ENCODE measurements at regions of chr1 and their contacts with region 1.

Region 1: GRCh38 chr1:13667691-13668090 is 32.3 kb upstream of the PRDM2 start:
- DNase-seq: no peak
- H3K4me3 ChIP-seq: no peak overlapping the region
- H3K27ac ChIP-seq: no peak overlapping the region
- H3K4me1 ChIP-seq: no peaks in the 10 kb centered on the region; a peak in 2 of 4 replicates
- H3K27me3 ChIP-seq: no peaks in the 10 kb centered on the region; the same call in 1 of the 2 replicates
- CTCF ChIP-seq: no peak
- EP300 ChIP-seq: no peak
- RAD21 ChIP-seq: no peak

Region 2: DNA sequence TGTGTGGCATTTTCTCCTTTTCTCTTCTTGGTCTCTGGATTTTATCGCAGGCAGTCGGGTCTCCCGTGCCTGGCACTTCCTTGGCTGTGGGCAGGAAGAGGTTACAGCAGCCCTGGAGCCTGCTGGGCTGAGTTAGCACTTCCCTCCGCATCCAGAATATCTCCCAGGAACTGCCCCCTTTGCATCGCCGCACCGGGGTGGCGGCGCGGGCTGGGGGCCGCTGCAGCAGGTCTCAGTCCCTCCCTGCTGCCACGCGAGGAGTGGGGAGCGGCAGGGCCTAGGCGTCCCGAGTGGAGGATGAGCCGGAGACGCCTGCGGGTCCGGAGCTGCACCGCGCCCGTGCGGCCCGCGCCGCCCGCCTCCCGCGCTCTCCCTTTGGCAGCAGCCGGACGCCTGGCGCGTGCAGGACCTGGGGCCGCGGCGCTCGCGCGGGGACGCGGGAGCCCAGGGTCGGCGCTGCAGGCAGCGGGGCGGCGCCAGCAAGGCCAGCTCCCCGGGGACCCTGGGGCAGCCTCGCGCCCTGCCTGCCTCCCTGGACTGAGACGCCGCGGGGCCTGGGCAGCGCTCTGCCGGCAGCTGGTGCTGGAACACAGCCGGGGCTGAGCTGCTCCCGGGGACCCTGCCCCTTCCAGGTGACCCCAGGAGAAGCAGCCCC is 225.1 kb after region 1 on chr1:
- CTCF ChIA-PET with region 1: no interaction called
- POLR2A ChIA-PET with region 1: no interaction called
- DNase-seq: peak; percentile 63
- H3K4me3 ChIP-seq: no peak overlapping the region
- H3K27ac ChIP-seq: no peak overlapping the region
- H3K4me1 ChIP-seq: no peaks in the 10 kb centered on the region
- H3K27me3 ChIP-seq: peaks cover 11% of the 10 kb centered on the region
- CTCF ChIP-seq: no peak
- EP300 ChIP-seq: no peak
- RAD21 ChIP-seq: no peak

Region 3: GRCh38 chr1:13950637-13951036 is 282.9 kb after region 1 on chr1:
- CTCF ChIA-PET with region 1: interaction called, 13 read pairs
- POLR2A ChIA-PET with region 1: no interaction called
- DNase-seq: peak; percentile 31
- H3K4me3 ChIP-seq: no peak overlapping the region
- H3K27ac ChIP-seq: no peak overlapping the region
- H3K4me1 ChIP-seq: no peaks in the 10 kb centered on the region
- H3K27me3 ChIP-seq: no peaks in the 10 kb centered on the region; the same call in 1 of the 2 replicates
- CTCF ChIP-seq: peak; percentile 37; the same call in 1 of the 2 replicates
- EP300 ChIP-seq: no peak
- RAD21 ChIP-seq: no peak

Region 4: DNA sequence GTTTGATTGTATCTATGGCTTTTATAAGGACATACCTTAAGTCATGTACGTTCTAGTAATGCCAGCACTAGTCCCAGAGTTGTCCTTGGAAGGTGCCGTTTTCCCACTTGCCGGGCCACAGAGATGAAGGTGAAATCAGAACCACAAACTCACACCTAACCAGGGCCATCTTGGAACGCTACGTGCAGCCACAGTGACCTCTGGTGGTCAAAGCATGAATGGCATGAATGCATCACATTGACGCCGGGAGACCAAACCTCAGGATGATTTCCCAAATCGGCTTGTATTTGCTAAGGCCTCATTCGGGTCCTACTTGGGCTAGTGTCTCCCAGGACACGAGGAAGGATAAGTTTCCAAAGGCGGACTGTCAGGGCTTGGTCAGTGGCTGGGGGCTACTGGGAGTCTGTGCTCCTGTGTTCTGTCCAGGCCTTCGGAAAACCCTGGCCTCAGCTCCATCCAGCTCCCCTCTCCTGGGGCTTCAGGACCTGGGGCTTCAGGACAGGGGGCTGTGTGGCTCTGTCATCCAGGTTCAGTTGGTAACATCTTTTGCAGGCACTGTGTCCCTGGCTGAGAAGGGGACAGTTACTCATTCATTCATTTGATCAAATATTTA is 292.8 kb after region 1 on chr1:
- CTCF ChIA-PET with region 1: interaction called, 31 read pairs
- POLR2A ChIA-PET with region 1: no interaction called
- DNase-seq: peak; percentile 65
- H3K4me3 ChIP-seq: no peak overlapping the region; a peak in 1 of 4 replicates
- H3K27ac ChIP-seq: no peak overlapping the region
- H3K4me1 ChIP-seq: no peaks in the 10 kb centered on the region
- H3K27me3 ChIP-seq: no peaks in the 10 kb centered on the region
- CTCF ChIP-seq: peak; percentile 94
- EP300 ChIP-seq: no peak
- RAD21 ChIP-seq: peak; percentile 94